ENCODE measurements at regions of chr2 and their contacts with region 1.

Region 1: GRCh38 chr2:172864182-172864581 is 128.5 kb downstream of the RAPGEF4 start:
- DNase-seq: peak; percentile 53 to 85
- H3K4me3 ChIP-seq: no peak overlapping the region
- H3K4me1 ChIP-seq: peaks cover 15% of the 10 kb centered on the region
- H3K27me3 ChIP-seq: no peaks in the 10 kb centered on the region

Region 2: DNA sequence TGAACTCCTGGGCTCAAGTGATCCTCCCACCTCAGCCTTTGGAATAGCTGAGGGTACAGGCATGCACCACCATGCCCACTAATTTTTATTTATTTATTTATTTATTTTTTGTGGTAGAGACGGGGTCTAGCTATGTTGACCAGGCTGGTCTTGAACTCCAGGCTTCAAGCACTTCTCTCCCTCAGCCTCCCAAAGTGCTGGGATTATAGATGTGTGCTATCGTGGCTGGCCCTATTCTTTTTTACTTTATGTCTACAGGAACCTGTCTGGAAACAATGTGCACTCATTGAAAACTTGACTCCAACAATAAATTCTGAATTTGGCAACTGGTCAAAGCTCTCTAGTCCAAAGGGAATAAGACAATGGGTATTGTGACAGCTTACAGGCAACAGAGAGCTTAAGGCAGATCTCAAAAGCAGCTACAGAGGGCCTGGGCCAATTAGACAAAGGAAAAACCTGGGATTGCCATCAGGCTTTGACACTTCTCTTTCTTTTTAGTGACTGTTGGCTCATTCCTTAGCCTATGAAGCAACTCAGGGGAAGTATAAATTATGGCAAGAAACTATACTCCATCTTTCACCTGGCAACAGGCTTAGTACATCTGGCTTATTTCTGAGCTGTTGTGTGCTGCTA is 183.6 kb before region 1 on chr2:
- in situ Hi-C with region 1: no loop called
- DNase-seq: peak; percentile 43 to 61
- H3K4me3 ChIP-seq: no peak overlapping the region
- H3K4me1 ChIP-seq: no peaks in the 10 kb centered on the region
- H3K27me3 ChIP-seq: no peaks in the 10 kb centered on the region

Region 3: DNA sequence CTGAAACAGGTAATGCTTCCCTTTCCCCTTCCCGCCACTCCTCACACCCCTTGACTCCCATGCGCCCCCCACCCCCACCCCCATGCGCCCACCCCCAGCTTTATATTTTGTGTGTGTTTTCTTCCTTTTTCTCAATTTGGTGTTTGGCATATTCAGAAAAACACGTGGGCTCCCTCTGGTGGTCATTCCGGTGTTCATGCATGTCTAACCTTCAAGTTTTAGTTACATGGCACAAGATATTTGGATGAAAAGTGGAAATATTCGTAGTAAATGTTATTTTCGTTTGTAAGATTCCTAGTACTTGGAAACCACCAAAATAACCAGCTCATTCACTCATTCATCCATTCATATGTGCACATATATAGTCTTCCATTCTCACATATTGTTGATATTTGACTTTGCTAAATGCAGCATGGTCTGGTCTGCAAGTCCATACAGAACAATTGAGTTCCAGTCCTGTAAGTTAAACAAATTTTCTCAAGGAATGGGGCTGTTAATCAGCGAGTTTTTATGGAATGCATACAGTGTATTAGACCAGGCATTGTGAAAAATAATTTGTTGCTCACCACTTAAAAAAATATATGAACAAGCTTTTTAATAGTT is 67.8 kb after region 1 on chr2:
- in situ Hi-C with region 1: loop called (anchors 5 kb)
- DNase-seq: peak; percentile 59 to 86
- H3K4me3 ChIP-seq: no peak overlapping the region
- H3K4me1 ChIP-seq: peaks cover 23% of the 10 kb centered on the region
- H3K27me3 ChIP-seq: no peaks in the 10 kb centered on the region

Region 4: DNA sequence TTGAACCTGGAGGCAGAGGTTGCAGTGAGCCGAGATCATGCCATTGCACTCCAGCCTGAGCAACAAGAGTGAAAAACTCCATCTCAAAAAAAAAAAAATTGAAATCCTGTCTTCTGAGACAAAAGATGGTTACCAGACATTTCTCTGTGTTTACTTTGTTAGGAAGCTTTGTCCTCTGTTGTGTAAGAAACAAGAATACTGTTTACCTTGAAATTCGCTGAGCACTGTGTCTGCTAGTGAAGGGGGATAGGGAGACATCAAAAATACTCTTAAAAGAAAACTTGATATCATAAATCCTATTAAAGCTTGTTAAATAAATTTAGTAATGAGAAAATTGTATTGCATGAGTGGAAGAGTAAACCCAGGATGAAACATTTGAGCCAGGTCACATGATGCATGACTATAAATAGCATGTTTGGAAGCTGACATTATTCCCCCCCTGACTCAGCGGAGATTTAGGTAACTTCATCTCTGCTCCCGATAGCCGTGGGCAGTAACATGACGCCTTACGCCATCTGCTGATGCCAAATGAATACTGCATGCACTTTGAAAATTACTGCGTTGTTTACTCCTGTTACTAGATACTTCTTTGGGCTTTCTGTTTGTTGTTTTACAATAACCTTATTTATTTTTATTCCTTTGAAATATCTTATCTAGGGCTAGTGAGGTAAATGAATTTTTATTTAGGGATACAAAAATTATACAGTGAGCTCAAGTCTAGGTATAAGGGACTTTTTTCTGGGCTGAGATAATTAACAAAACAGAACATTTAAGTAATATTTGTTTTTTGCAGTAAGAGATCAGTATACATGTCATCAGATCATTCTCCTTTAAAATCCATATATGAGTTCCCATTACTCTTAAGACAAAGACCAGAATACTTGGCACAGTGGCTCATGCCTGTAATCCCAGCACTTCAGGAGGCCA is 346.4 kb after region 1 on chr2:
- in situ Hi-C with region 1: no loop called
- DNase-seq: peak; percentile 74 to 77
- H3K4me3 ChIP-seq: no peak overlapping the region
- H3K4me1 ChIP-seq: peaks cover 3% of the 10 kb centered on the region
- H3K27me3 ChIP-seq: no peaks in the 10 kb centered on the region